Prostate gland (tissue), 2 donors: ENCODE measurements at regions of chr11 and their contacts with region 1.

Region 1: DNA sequence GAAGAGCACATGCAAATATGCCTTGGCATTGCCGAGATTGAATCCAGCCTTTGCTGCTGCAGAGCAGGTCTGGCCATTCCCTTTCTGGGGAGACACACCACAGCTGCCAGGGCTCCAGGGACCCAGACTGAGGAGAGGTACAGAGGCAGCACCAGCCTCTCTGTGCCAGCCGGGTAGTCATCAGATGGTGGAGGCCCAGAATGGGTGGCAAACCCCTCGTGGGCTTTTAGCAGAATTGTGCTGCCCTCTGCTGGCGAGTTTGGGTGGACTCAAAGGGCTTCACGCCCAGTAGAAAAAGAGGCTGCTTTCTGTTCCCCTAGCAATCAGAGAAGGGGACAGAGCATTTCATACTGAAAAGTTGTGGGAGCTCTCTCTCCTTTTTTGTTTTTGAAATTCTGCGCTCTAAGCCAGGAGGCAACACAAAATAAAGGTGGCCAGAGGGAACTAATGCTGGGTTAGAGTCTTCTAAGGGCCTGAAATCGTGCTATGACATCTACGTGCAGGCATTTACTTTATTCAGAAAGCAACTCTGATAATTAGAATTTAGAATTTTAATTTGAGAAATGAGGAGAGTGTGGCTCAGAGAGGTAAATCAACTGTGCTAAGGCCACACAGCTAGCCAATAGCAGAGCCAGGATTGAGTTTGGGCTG is 158.8 kb upstream of the NAV2 start:
- DNase-seq: peak; percentile 67
- H3K4me3 ChIP-seq: no peak overlapping the region
- H3K27ac ChIP-seq: no peak overlapping the region
- H3K4me1 ChIP-seq: no peaks in the 10 kb centered on the region
- H3K27me3 ChIP-seq: no peaks in the 10 kb centered on the region
- CTCF ChIP-seq: peak; percentile 87 to 92 (median 90)
- POLR2A ChIP-seq: no peak

Region 2: GRCh38 chr11:19076744-19077589 is 476.8 kb before region 1 on chr11:
- intact Hi-C with region 1: loop called (anchors 2 kb)
- DNase-seq: peak; percentile 39
- H3K4me3 ChIP-seq: no peak overlapping the region
- H3K27ac ChIP-seq: no peak overlapping the region
- H3K4me1 ChIP-seq: no peaks in the 10 kb centered on the region
- H3K27me3 ChIP-seq: no peaks in the 10 kb centered on the region
- CTCF ChIP-seq: peak; percentile 78 to 88 (median 84)
- POLR2A ChIP-seq: no peak

Region 3: GRCh38 chr11:19259487-19260345 is 294.1 kb before region 1 on chr11:
- intact Hi-C with region 1: loop called (anchors 5 kb)
- DNase-seq: peak; percentile 32
- H3K4me3 ChIP-seq: no peak overlapping the region
- H3K27ac ChIP-seq: no peak overlapping the region
- H3K4me1 ChIP-seq: no peaks in the 10 kb centered on the region
- H3K27me3 ChIP-seq: no peaks in the 10 kb centered on the region
- CTCF ChIP-seq: peak; percentile 73 to 76 (median 75)
- POLR2A ChIP-seq: no peak

Region 4: GRCh38 chr11:19311308-19312030 is 242.3 kb before region 1 on chr11:
- intact Hi-C with region 1: loop called (anchors 2 kb)
- DNase-seq: peak; percentile 50
- H3K4me3 ChIP-seq: no peak overlapping the region
- H3K27ac ChIP-seq: no peak overlapping the region
- H3K4me1 ChIP-seq: no peaks in the 10 kb centered on the region
- H3K27me3 ChIP-seq: peaks cover 4% of the 10 kb centered on the region
- CTCF ChIP-seq: peak; percentile 37 to 66 (median 62)
- POLR2A ChIP-seq: no peak

Region 5: GRCh38 chr11:19524161-19524671 is 29.6 kb before region 1 on chr11:
- intact Hi-C with region 1: no loop called
- DNase-seq: no peak
- H3K4me3 ChIP-seq: no peak overlapping the region
- H3K27ac ChIP-seq: no peak overlapping the region
- H3K4me1 ChIP-seq: no peaks in the 10 kb centered on the region
- H3K27me3 ChIP-seq: peaks cover 4% of the 10 kb centered on the region
- CTCF ChIP-seq: no peak
- POLR2A ChIP-seq: no peak

Region 6: DNA sequence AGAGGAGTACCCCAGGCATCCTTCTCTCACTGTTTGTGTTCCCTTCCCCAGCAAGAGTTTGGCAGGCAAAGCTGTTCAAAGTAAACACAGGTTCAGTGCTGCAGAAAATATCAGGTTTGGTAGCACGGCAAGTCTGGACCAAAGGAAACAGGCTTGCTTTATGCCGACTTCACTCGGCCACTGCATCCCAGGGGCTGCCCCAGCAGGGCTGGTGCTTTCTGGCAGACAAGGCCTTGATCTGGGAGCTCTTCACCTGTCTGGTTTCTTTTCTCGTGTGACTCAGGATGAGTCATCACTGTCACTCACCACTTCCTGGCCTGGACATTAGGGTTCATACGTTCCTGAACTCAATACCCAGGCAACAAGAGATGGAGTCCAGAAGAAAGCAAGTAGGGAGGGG is 106.3 kb after region 1 on chr11:
- intact Hi-C with region 1: no loop called
- DNase-seq: peak; percentile 69
- H3K4me3 ChIP-seq: no peak overlapping the region
- H3K27ac ChIP-seq: peak overlapping the region; percentile 16 to 53
- H3K4me1 ChIP-seq: no peaks in the 10 kb centered on the region
- H3K27me3 ChIP-seq: no peaks in the 10 kb centered on the region
- CTCF ChIP-seq: no peak
- POLR2A ChIP-seq: no peak

Region 7: DNA sequence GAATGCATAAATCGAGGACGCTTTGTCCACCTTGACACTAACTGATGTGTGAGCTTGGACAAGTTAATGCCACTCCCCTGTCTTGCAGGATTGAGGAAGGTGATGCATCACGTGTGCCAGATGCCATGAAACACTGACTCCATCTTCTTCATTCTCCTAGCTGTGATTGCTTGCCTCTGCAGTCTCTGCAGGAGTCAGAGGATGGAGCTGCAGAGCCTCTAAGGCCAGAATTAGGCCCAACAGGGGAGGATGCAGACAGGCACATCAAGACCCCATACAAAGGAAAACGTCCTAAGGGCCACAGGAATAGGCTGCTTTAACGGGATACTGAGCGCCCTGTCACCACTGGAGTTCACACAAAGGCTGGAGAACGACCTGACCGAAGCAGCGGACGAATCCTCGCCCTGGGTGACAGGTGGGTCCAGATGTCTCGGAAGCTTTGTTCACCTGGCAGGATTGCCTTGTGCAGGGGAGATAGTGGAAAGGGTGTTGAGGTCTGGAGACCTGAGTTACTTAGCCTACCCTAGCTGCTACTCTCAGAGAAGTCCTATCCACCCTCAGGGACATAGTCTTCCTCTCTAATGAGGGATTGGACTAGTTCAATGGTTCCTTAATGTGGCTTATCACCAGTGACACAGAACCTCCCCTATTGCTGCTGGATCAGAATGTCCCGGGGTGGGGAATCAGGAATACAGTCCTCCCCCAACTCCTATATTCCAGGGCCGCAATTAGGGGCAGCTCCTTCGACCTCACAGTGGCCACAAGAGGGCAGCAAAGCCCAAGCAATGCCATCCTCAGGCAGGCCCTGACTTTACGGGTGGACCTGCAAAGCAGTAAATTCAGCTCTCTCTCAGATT is 574.1 kb after region 1 on chr11:
- intact Hi-C with region 1: loop called (anchors 5 kb)
- DNase-seq: peak; percentile 57
- H3K4me3 ChIP-seq: no peak overlapping the region
- H3K27ac ChIP-seq: no peak overlapping the region
- H3K4me1 ChIP-seq: no peaks in the 10 kb centered on the region
- H3K27me3 ChIP-seq: no peaks in the 10 kb centered on the region
- CTCF ChIP-seq: peak; percentile 64 to 81 (median 75)
- POLR2A ChIP-seq: no peak